Activated B cell treated with CpG ODN at 0.5 μM for 24 hours (primary cell): ENCODE measurements at regions of chr1 and their contacts with region 1.

Region 1: DNA sequence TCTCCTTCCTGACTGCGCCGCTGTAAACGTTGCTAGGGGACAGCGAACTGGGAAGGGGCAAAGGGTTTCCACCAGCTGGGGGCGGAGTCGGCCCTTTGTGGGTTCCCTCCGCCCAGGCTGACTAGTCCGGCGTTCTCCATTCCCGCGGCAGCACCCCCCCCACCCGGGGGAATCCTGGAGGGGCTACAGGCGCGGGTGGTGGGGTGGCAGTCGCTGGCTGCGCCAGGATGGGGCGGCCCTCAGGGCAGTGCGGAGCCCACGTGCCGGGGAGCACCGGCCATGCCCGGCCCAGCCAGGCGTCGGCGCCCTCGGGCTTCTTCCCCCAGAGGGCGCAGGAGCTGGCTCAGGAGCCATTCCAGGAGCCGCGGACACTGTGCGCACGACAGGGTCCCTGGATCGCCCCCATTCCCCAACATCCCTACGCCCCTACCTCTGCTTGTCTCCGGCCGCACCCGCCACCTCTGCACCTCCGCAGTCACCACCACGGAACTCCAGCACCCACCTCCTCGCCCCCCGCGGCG is 476 bp downstream of the BATF3 start:
- DNase-seq: peak; percentile 56
- ATAC-seq: peak; percentile 55
- H3K4me3 Mint-ChIP-seq: peak overlapping the region; percentile 88
- H3K27ac Mint-ChIP-seq: peak overlapping the region; percentile 79
- H3K4me1 Mint-ChIP-seq: peaks cover 45% of the 10 kb centered on the region
- H3K27me3 Mint-ChIP-seq: peaks cover 11% of the 10 kb centered on the region
- CTCF ChIP-seq: no peak

Region 2: DNA sequence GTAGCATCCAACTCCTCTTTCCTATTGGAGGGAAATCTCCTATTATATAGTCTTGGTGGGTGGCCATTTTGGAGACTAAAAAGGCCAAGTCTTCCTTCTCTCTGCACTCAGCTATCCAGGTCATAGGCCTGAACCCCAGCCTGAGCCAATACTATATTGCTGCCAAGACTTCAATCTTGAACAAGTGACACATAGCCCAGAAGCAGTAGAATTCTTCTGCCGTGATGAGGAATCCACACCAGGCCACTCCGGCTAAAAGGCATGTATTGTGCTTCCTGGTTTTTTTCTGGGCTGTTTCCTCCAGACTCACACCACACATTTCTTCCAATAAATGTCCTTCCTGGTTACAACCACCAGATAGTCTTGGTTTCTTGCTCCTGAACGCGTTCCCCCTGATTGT is 47.6 kb before region 1 on chr1:
- CTCF ChIA-PET with region 1: no interaction called
- POLR2A ChIA-PET with region 1: no interaction called
- intact Hi-C with region 1: no loop called
- DNase-seq: no peak
- ATAC-seq: no peak
- H3K4me3 Mint-ChIP-seq: no peak overlapping the region
- H3K27ac Mint-ChIP-seq: no peak overlapping the region
- H3K4me1 Mint-ChIP-seq: no peaks in the 10 kb centered on the region
- H3K27me3 Mint-ChIP-seq: peaks cover 9% of the 10 kb centered on the region
- CTCF ChIP-seq: no peak

Region 3: DNA sequence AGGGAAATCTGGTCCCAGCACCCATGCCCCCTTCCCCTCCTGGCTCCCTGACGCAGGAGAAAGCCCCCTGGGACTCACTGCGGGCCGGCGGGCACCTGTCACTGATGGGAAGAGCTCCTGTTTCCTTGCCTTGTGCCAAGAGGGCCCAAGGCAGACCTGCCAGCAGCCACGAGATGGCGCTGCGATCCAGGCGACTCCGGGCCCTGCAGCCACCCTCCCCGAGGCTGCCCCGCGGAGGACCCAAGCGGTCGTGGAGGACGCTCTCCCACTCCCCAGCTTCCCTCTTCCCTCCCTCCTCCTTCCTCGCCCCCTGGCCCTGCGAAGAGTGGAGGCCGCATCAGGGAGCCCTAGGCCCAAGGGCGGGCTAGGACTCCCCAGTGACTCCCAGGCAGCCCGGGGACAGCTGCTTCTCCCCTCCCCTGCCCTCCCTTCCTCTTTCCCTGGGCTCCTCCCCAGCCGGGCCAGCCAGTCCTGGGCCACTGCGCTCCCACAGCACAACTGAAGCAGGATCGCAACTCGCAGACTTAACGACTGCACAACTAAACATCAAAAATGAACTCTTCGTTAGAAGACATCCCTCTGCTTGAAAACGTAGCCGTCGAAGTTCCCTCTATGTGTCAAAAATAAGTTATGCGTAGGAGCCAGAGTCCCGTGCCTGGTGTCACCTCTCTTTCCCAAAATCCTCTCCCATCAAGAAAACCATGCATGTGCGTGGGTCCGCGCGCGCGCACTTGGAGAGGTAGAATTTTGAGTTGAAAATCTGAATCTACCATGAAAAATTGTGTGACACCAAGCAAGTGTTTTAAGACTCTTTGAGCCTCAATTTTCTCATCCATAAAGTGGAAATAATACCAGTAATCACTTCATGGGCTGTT is 33.7 kb before region 1 on chr1:
- CTCF ChIA-PET with region 1: interaction called, 15 read pairs
- POLR2A ChIA-PET with region 1: interaction called, 7 read pairs
- intact Hi-C with region 1: loop called (anchors 1 kb)
- DNase-seq: peak; percentile 80
- ATAC-seq: peak; percentile 94
- H3K4me3 Mint-ChIP-seq: peak overlapping the region; percentile 82
- H3K27ac Mint-ChIP-seq: peak overlapping the region; percentile 53
- H3K4me1 Mint-ChIP-seq: peaks cover 17% of the 10 kb centered on the region
- H3K27me3 Mint-ChIP-seq: no peaks in the 10 kb centered on the region
- CTCF ChIP-seq: peak; percentile 61

Region 4: DNA sequence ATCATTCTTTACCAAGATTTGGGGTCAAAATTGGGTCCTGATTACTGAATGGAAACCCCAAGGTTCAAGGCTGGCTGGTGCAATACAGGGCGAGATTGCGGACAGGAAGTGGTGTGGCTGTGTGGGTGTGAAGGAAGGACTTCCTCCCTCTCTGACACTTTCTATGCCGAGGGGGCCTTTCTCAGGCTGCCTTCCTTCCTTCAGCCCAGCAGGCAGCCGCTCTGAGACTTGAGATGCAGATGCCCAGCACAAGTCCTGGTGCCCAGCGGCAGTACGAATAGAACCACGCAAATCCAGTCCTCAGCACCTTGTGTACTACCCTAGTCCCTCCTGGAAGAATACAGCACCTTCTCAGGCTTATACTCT is 15.8 kb before region 1 on chr1:
- CTCF ChIA-PET with region 1: no interaction called
- POLR2A ChIA-PET with region 1: interaction called, 19 read pairs
- intact Hi-C with region 1: loop called (anchors 1 kb)
- DNase-seq: no peak
- ATAC-seq: peak; percentile 60
- H3K4me3 Mint-ChIP-seq: peak overlapping the region; percentile 68
- H3K27ac Mint-ChIP-seq: peak overlapping the region; percentile 84
- H3K4me1 Mint-ChIP-seq: peaks cover 45% of the 10 kb centered on the region
- H3K27me3 Mint-ChIP-seq: no peaks in the 10 kb centered on the region
- CTCF ChIP-seq: no peak

Region 5: GRCh38 chr1:212752252-212752933 is 53.2 kb after region 1 on chr1:
- CTCF ChIA-PET with region 1: interaction called, 3 read pairs
- POLR2A ChIA-PET with region 1: interaction called, 7 read pairs
- intact Hi-C with region 1: loop called (anchors 1 kb)
- DNase-seq: no peak
- ATAC-seq: peak; percentile 42
- H3K4me3 Mint-ChIP-seq: peak overlapping the region; percentile 50
- H3K27ac Mint-ChIP-seq: peak overlapping the region; percentile 77
- H3K4me1 Mint-ChIP-seq: peaks cover 49% of the 10 kb centered on the region
- H3K27me3 Mint-ChIP-seq: no peaks in the 10 kb centered on the region
- CTCF ChIP-seq: no peak

Region 6: DNA sequence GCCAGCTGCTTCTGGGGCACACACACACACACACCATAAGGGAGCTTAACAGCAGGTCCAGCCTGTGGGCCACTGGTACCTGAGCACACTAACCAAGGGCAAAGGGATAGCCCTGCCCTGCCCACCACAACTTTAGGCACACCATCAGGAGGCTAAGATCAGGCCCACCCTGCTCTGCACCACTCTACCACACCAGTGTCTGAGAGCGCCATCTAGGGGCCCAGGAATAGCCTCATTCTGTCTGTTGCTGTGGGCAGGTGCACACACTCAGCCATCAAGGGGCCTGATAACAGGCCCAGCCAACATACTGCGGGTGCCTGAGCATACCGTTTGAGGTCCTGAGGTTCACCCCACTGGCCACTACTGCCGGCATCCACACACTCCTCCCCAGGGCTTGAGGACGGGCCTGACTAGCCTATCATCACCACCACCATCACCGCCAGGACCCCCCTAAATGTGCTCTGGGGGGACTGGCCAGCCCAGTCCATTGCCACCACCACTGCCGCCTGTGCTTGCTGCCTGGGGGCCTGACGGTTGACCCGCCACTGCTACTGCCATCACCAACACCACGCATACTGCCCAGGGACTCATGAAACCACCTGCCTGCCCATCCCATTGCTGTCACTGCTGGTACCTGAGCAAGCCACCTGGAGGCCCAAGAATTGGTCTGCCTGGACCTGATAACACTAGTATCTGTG is 61.1 kb after region 1 on chr1:
- CTCF ChIA-PET with region 1: interaction called, 3 read pairs
- POLR2A ChIA-PET with region 1: no interaction called
- intact Hi-C with region 1: loop called (anchors 2 kb)
- DNase-seq: no peak
- ATAC-seq: peak; percentile 84
- H3K4me3 Mint-ChIP-seq: no peak overlapping the region
- H3K27ac Mint-ChIP-seq: no peak overlapping the region
- H3K4me1 Mint-ChIP-seq: peaks cover 7% of the 10 kb centered on the region
- H3K27me3 Mint-ChIP-seq: no peaks in the 10 kb centered on the region
- CTCF ChIP-seq: no peak

Region 7: GRCh38 chr1:212782422-212783154 is 83.4 kb after region 1 on chr1:
- CTCF ChIA-PET with region 1: interaction called, 7 read pairs
- POLR2A ChIA-PET with region 1: interaction called, 3 read pairs
- intact Hi-C with region 1: loop called (anchors 1 kb)
- DNase-seq: no peak
- ATAC-seq: peak; percentile 66
- H3K4me3 Mint-ChIP-seq: no peak overlapping the region
- H3K27ac Mint-ChIP-seq: no peak overlapping the region
- H3K4me1 Mint-ChIP-seq: peaks cover 2% of the 10 kb centered on the region
- H3K27me3 Mint-ChIP-seq: no peaks in the 10 kb centered on the region
- CTCF ChIP-seq: peak; percentile 80

Region 8: DNA sequence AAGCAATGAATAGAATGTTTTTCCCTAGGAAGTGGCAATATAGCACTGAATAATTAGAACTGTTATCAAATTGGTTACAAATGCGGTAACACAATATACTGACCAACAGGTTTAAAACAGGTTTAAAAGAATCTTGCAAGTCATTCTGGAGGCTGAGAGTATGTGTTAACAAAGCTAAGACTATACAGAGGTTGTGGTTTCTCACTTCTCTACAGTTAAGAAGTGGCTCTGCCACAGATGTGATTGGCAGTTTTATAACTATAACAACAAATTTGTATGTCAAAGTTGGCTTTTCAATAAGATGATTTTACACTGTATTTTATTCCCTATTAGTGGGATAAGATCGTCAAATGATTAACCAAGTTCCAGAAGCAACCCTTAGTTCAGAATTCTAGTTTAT is 309.4 kb after region 1 on chr1:
- CTCF ChIA-PET with region 1: no interaction called
- POLR2A ChIA-PET with region 1: no interaction called
- intact Hi-C with region 1: no loop called
- DNase-seq: no peak
- ATAC-seq: no peak
- H3K4me3 Mint-ChIP-seq: no peak overlapping the region
- H3K27ac Mint-ChIP-seq: no peak overlapping the region
- H3K4me1 Mint-ChIP-seq: peaks cover 9% of the 10 kb centered on the region
- H3K27me3 Mint-ChIP-seq: no peaks in the 10 kb centered on the region
- CTCF ChIP-seq: no peak